CD8-positive, alpha-beta T cell (primary cell): ENCODE measurements at regions of chr3 and their contacts with region 1.

Region 1: DNA sequence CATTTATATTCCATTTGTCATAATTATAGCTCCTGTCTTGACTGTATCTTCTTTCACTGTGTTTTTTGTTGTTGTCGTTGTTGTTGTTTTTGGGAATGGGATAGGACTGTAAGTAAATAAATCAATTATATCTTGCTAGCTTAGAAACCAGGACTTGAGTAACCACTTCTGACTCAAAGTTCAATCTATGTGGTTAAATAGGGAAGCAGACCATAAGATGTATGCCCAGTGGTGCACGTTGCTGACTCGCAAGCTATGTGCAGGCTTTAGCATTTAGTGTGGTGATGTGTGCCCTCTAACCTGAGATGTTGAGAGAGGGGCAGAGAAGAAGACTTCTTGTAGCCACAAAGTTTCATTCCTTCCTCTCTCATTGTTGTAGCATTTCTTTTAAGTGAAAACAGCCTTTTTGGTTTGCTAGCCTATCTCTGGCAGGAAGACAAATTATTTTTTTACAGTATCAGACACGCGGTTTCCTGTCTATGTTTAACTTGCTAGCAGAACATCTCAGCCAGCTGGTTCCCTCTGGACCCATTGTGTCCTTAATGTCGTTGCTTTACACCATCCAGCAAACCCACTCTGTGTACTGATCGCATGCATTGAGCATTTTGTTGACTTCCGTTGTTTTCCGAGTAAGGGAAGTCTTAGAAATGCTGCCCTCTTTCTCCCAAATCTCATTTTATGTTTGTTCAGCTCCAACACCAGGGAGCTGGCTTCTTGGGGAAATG is 52.1 kb downstream of the TGFBR2 start:
- DNase-seq: peak in 7 of 9 experiments; percentile 31 to 85 (median 70)
- ATAC-seq: peak; percentile 54
- H3K4me3 ChIP-seq: peak overlapping the region in 1 of 2 experiments; percentile 3
- H3K4me3 Mint-ChIP-seq: peak overlapping the region; percentile 70
- H3K27ac ChIP-seq: peak overlapping the region; percentile 78 to 83
- H3K27ac Mint-ChIP-seq: peak overlapping the region; percentile 98
- H3K4me1 ChIP-seq: peaks cover 99% of the 10 kb centered on the region
- H3K4me1 Mint-ChIP-seq: peaks cover 99% of the 10 kb centered on the region
- H3K27me3 ChIP-seq: no peaks in the 10 kb centered on the region
- H3K27me3 Mint-ChIP-seq: no peaks in the 10 kb centered on the region
- CTCF ChIP-seq: no peak

Region 2: GRCh38 chr3:30286007-30286669 is 372.4 kb before region 1 on chr3:
- CTCF ChIA-PET with region 1: no interaction called
- POLR2A ChIA-PET with region 1: no interaction called
- intact Hi-C with region 1: no loop called
- DNase-seq: no peak
- ATAC-seq: no peak
- H3K4me3 ChIP-seq: no peak overlapping the region
- H3K4me3 Mint-ChIP-seq: no peak overlapping the region
- H3K27ac ChIP-seq: no peak overlapping the region
- H3K27ac Mint-ChIP-seq: no peak overlapping the region
- H3K4me1 ChIP-seq: peaks cover 10% of the 10 kb centered on the region
- H3K4me1 Mint-ChIP-seq: peaks cover 10% of the 10 kb centered on the region
- H3K27me3 ChIP-seq: no peaks in the 10 kb centered on the region
- H3K27me3 Mint-ChIP-seq: no peaks in the 10 kb centered on the region
- CTCF ChIP-seq: no peak

Region 3: GRCh38 chr3:30611613-30612436 is 46.7 kb before region 1 on chr3:
- CTCF ChIA-PET with region 1: interaction called, 21 read pairs
- POLR2A ChIA-PET with region 1: interaction called, 61 read pairs
- intact Hi-C with region 1: loop called (anchors 2 kb)
- DNase-seq: peak in 2 of 9 experiments; percentile 53 to 69
- ATAC-seq: peak; percentile 29
- H3K4me3 ChIP-seq: peak overlapping the region; percentile 89 to 94
- H3K4me3 Mint-ChIP-seq: peak overlapping the region; percentile 94
- H3K27ac ChIP-seq: peak overlapping the region; percentile 63 to 74
- H3K27ac Mint-ChIP-seq: peak overlapping the region; percentile 98
- H3K4me1 ChIP-seq: peaks cover 54% of the 10 kb centered on the region
- H3K4me1 Mint-ChIP-seq: peaks cover 68% of the 10 kb centered on the region
- H3K27me3 ChIP-seq: no peaks in the 10 kb centered on the region
- H3K27me3 Mint-ChIP-seq: no peaks in the 10 kb centered on the region
- CTCF ChIP-seq: no peak

Region 4: GRCh38 chr3:30628901-30629590 is 29.4 kb before region 1 on chr3:
- CTCF ChIA-PET with region 1: interaction called, 4 read pairs
- POLR2A ChIA-PET with region 1: interaction called, 24 read pairs
- intact Hi-C with region 1: loop called (anchors 1 to 2 kb)
- DNase-seq: peak in 2 of 9 experiments; percentile 57 to 76
- ATAC-seq: peak; percentile 9
- H3K4me3 ChIP-seq: peak overlapping the region in 1 of 2 experiments; percentile 19
- H3K4me3 Mint-ChIP-seq: peak overlapping the region; percentile 52
- H3K27ac ChIP-seq: peak overlapping the region; percentile 43 to 78
- H3K27ac Mint-ChIP-seq: peak overlapping the region; percentile 94
- H3K4me1 ChIP-seq: peaks cover 97% of the 10 kb centered on the region
- H3K4me1 Mint-ChIP-seq: peaks cover 92% of the 10 kb centered on the region
- H3K27me3 ChIP-seq: no peaks in the 10 kb centered on the region
- H3K27me3 Mint-ChIP-seq: no peaks in the 10 kb centered on the region
- CTCF ChIP-seq: peak; percentile 9

Region 5: GRCh38 chr3:30638685-30639412 is 19.6 kb before region 1 on chr3:
- CTCF ChIA-PET with region 1: interaction called, 7 read pairs
- POLR2A ChIA-PET with region 1: interaction called, 117 read pairs
- intact Hi-C with region 1: loop called (anchors 1 to 2 kb)
- DNase-seq: no peak
- ATAC-seq: no peak
- H3K4me3 ChIP-seq: peak overlapping the region in 1 of 2 experiments; percentile 25
- H3K4me3 Mint-ChIP-seq: peak overlapping the region; percentile 55
- H3K27ac ChIP-seq: peak overlapping the region in 1 of 2 experiments; percentile 77
- H3K27ac Mint-ChIP-seq: peak overlapping the region; percentile 94
- H3K4me1 ChIP-seq: peaks cover 100% of the 10 kb centered on the region
- H3K4me1 Mint-ChIP-seq: peaks cover 97% of the 10 kb centered on the region
- H3K27me3 ChIP-seq: no peaks in the 10 kb centered on the region
- H3K27me3 Mint-ChIP-seq: no peaks in the 10 kb centered on the region
- CTCF ChIP-seq: no peak

Region 6: GRCh38 chr3:30644593-30645012 is 13.9 kb before region 1 on chr3:
- CTCF ChIA-PET with region 1: interaction called, 7 read pairs
- POLR2A ChIA-PET with region 1: interaction called, 117 read pairs
- intact Hi-C with region 1: loop called (anchors 1 to 2 kb)
- DNase-seq: peak in 8 of 9 experiments; percentile 26 to 86 (median 62)
- ATAC-seq: peak; percentile 67
- H3K4me3 ChIP-seq: peak overlapping the region in 1 of 2 experiments; percentile 13
- H3K4me3 Mint-ChIP-seq: peak overlapping the region; percentile 59
- H3K27ac ChIP-seq: peak overlapping the region; percentile 50 to 77
- H3K27ac Mint-ChIP-seq: peak overlapping the region; percentile 92
- H3K4me1 ChIP-seq: peaks cover 100% of the 10 kb centered on the region
- H3K4me1 Mint-ChIP-seq: peaks cover 94% of the 10 kb centered on the region
- H3K27me3 ChIP-seq: no peaks in the 10 kb centered on the region
- H3K27me3 Mint-ChIP-seq: no peaks in the 10 kb centered on the region
- CTCF ChIP-seq: no peak

Region 7: GRCh38 chr3:30672959-30673358 is 14.5 kb after region 1 on chr3:
- CTCF ChIA-PET with region 1: interaction called, 13 read pairs
- POLR2A ChIA-PET with region 1: interaction called, 90 read pairs
- intact Hi-C with region 1: loop called in 1 of 2 experiments (anchors 2 kb)
- DNase-seq: no peak
- ATAC-seq: no peak
- H3K4me3 ChIP-seq: no peak overlapping the region
- H3K4me3 Mint-ChIP-seq: peak overlapping the region; percentile 15
- H3K27ac ChIP-seq: peak overlapping the region; percentile 2 to 7
- H3K27ac Mint-ChIP-seq: peak overlapping the region; percentile 72
- H3K4me1 ChIP-seq: peaks cover 93% of the 10 kb centered on the region
- H3K4me1 Mint-ChIP-seq: peaks cover 98% of the 10 kb centered on the region
- H3K27me3 ChIP-seq: no peaks in the 10 kb centered on the region
- H3K27me3 Mint-ChIP-seq: no peaks in the 10 kb centered on the region
- CTCF ChIP-seq: no peak

Region 8: DNA sequence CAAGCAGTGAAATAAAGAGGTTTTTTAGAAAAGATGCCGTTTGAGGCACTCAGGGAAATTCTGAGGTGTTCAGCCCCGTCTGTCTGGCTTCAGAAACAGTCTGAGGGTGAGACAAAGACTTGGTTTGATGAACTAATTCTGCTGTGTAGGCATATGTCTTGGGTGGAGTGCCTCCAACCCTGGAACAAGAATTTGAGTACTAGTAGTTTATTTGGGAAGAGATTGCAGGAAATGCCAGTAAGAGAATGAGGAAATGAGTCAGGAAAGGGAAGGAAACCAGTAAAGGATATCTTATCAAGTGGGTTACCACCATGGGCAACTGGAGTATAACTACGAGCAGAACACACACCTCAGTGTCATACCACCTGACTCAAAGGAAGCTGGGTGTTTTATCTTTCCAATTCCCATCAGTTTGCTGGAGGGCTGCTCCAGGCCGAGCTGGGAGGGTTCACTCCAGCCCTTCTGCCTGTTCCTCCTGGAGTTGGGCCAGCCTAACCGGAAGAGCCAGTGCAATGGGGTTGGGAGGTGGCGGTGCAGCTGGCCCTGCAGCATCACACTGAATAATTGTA is 23.2 kb after region 1 on chr3:
- CTCF ChIA-PET with region 1: interaction called, 4 read pairs
- POLR2A ChIA-PET with region 1: interaction called, 10 read pairs
- intact Hi-C with region 1: no loop called
- DNase-seq: peak in 1 of 9 experiments; percentile 46
- ATAC-seq: peak; percentile 41
- H3K4me3 ChIP-seq: no peak overlapping the region
- H3K4me3 Mint-ChIP-seq: peak overlapping the region; percentile 23
- H3K27ac ChIP-seq: peak overlapping the region in 1 of 2 experiments; percentile 32
- H3K27ac Mint-ChIP-seq: peak overlapping the region; percentile 92
- H3K4me1 ChIP-seq: peaks cover 87% of the 10 kb centered on the region
- H3K4me1 Mint-ChIP-seq: peaks cover 95% of the 10 kb centered on the region
- H3K27me3 ChIP-seq: no peaks in the 10 kb centered on the region
- H3K27me3 Mint-ChIP-seq: no peaks in the 10 kb centered on the region
- CTCF ChIP-seq: no peak